Adrenal gland (tissue), 19 donors: ENCODE measurements at regions of chr13 and their contacts with region 1.

Region 1: DNA sequence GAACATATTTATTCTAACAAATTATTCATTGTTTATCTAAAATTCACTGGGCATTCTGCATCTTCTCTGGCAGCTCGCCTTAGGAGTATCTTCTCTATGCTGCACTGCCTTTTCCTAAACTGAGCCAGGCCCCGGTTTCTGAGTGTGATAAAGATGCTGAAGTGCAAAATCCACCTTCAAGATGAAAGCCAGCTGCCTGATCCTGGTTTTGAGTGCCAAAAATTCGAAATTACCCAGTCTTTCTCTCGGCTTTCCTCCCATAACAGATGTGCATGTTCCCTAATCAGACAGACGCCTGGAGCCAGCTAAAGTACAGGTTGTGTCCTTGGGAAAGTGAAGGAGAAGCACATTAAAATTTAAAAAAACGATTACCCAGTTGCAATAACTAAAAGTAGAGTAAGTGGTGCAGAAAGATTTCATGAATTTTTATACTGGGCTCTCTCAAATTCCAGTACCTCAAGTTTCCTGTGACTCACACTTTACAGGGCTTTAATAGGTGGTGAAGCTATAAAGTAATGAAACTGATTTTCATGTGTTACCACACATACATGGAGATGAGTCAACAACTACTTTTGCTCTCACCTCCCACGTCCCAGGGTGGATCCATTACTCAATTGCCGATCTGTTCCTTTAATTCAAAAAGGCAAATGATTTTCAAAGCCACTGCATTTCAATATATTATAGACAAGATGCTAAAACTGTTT is 65.0 kb upstream of the GTF2F2 start:
- DNase-seq: no peak
- H3K4me3 ChIP-seq: no peak overlapping the region
- H3K27ac ChIP-seq: peak overlapping the region in 1 of 5 donors; percentile 20
- H3K4me1 ChIP-seq: peaks cover 0 to 3% of the 10 kb centered on the region in 2 donors
- H3K27me3 ChIP-seq: no peaks in the 10 kb centered on the region
- CTCF ChIP-seq: no peak
- POLR2A ChIP-seq: no peak

Region 2: DNA sequence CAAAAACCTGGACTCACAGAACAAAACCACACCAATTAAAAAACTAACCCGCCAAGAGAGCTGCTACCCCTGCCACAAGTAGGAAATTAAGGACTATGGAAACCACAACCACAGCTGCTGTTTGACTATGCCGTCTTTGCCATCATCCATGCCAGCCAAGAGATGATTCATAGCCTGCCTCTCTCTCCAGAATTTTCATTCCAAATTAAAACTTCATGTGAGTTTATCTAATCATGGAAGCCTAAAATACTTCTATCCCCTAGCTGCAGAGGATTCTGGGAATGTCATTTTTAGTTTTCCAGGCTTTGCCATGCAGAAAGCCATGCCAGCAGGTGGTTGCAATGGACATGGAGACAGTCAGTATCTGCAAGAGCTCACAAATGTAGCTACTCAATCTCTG is 37.3 kb after region 1 on chr13:
- intact Hi-C with region 1: no loop called
- DNase-seq: no peak
- H3K4me3 ChIP-seq: no peak overlapping the region
- H3K27ac ChIP-seq: no peak overlapping the region
- H3K4me1 ChIP-seq: no peaks in the 10 kb centered on the region
- H3K27me3 ChIP-seq: no peaks in the 10 kb centered on the region
- CTCF ChIP-seq: no peak
- POLR2A ChIP-seq: no peak

Region 3: DNA sequence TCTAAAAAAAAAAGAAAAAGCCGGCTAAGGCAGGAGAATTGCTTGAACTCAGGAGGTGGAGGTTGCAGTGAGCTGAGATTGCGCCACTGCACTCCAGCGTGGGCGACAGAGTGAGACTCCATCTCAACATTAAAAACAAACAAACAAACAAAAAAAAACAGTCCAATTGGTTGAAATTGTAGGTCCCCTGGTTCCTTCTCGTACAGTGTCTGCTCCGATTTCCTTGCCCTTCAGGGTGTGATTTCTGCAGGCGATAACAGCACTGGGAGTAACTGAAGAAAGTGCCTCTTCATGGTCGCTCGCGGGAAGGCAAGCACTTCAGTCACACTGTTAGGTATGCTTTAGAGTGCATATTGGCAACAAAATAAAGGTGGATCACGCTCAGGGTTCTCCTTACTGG is 245.9 kb after region 1 on chr13:
- intact Hi-C with region 1: loop called in 1 of 2 experiments (anchors 10 kb)
- DNase-seq: no peak
- H3K4me3 ChIP-seq: no peak overlapping the region
- H3K27ac ChIP-seq: no peak overlapping the region
- H3K4me1 ChIP-seq: no peaks in the 10 kb centered on the region
- H3K27me3 ChIP-seq: no peaks in the 10 kb centered on the region
- CTCF ChIP-seq: no peak
- POLR2A ChIP-seq: no peak

Region 4: DNA sequence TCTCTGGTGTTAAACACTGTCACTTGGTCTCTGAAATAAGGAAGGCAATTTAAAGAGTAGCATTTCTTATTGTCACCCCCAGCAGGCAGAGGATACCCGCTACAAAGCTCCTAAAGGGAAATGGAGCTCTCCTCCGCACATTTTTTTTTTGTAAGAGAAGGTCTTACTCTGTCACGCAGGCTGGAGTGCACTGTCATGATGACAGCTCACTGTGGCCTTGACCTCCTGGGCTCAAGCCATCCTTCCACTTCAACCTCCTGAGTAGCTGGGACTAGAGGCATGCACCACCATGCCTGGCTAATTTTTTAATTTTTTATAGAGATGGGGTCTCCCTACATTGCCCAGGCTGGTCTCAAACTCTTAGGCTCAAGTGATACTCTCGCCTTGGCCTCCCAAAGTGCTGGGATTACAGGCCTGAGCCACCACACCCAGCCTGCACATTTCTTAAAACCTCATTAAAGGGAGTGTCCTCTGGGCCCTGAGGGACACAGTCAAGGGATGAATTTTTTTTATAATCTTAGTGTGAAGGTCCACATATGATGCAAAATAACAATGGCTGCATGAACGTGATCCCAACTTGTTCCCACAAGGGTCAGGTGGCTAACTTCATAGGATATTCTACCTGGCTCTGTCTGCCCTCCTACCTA is 330.7 kb after region 1 on chr13:
- intact Hi-C with region 1: no loop called
- DNase-seq: peak in 6 of 7 donors; percentile 56 to 81 (median 70)
- H3K4me3 ChIP-seq: no peak overlapping the region
- H3K27ac ChIP-seq: peak overlapping the region in 1 of 5 donors; percentile 46
- H3K4me1 ChIP-seq: peaks cover 8% of the 10 kb centered on the region in 2 donors
- H3K27me3 ChIP-seq: no peaks in the 10 kb centered on the region
- CTCF ChIP-seq: no peak
- POLR2A ChIP-seq: no peak